ENCODE measurements at regions of chr20 and their contacts with region 1.

Region 1: GRCh38 chr20:57498425-57499400 is 26.2 kb downstream of the CTCFL start:
- DNase-seq: peak; percentile 60
- H3K4me3 ChIP-seq: no peak overlapping the region
- H3K27ac ChIP-seq: no peak overlapping the region
- H3K4me1 ChIP-seq: peaks cover 2 to 6% of the 10 kb centered on the region in 2 experiments; a peak in 2 of 4 replicates
- H3K27me3 ChIP-seq: no peaks in the 10 kb centered on the region; the same call in 1 of the 2 replicates
- CTCF ChIP-seq: peak; percentile 47
- EP300 ChIP-seq: no peak
- RAD21 ChIP-seq: peak; percentile 66

Region 2: GRCh38 chr20:57266291-57267157 is 232.2 kb before region 1 on chr20 and contains the start of gene BMP7:
- CTCF ChIA-PET with region 1: no interaction called
- POLR2A ChIA-PET with region 1: no interaction called
- DNase-seq: peak; percentile 79
- H3K4me3 ChIP-seq: peak within 1 kb of the TSS in 1 of 2 experiments; percentile 42; a peak in 1 of 4 replicates
- H3K27ac ChIP-seq: no peak within 1 kb of the TSS; a peak in 1 of 4 replicates
- H3K4me1 ChIP-seq: peaks cover 0 to 15% of the 10 kb centered on the region in 2 experiments; a peak in 1 of 4 replicates
- H3K27me3 ChIP-seq: peaks cover 8% of the 10 kb centered on the region; the same call in 1 of the 2 replicates
- CTCF ChIP-seq: no peak
- EP300 ChIP-seq: no peak
- RAD21 ChIP-seq: no peak
- polyA plus RNA-seq, gene BMP7: 0.10 TPM in 1 of 2 replicates, not detected in the other

Region 3: DNA sequence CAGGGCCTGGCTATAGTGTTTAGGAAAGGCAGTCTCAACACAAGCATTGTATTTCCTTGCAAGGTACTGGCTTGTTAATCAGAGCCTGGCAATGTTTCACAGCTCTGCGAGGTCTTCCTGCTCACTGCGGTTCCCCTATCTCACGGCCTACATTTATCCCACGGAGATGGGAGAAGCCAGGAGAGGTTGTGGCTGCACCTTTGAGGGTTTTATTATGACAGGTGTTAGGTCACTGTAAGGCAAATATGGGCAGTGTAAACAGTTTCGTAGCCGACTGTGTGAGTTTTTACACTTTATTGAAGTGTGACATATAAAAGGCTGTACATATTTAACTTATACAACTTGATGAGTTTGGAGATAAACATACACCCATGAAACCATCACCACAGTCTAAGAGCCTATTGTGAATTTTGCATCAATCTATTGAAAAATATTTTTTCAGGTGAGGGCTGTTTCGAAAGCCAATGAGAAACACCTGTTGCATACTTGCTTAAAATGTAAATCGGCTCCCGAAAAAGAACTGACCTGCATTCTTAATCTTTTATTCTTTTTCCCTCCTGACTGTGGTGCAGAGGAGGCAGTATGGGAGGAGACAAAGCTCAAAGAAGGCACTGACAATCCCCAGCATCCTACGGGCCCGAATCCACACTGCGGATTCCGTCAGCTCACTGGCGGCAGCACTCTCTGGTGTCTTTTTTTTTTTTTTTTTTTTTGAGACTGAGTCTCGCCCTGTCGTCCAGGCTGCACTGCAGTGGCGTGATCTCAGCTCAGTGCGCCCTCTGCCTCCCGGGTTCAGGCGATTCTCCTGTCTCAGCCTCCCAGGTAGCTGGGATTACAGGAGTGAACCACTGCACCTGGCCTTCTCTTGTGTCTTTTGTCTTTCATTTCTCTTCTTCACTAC is 115.0 kb before region 1 on chr20:
- CTCF ChIA-PET with region 1: interaction called, 68 read pairs
- POLR2A ChIA-PET with region 1: no interaction called
- DNase-seq: no peak
- H3K4me3 ChIP-seq: no peak overlapping the region
- H3K27ac ChIP-seq: no peak overlapping the region
- H3K4me1 ChIP-seq: no peaks in the 10 kb centered on the region
- H3K27me3 ChIP-seq: no peaks in the 10 kb centered on the region
- CTCF ChIP-seq: no peak
- EP300 ChIP-seq: no peak
- RAD21 ChIP-seq: no peak

Region 4: GRCh38 chr20:57473246-57474048 is 25.3 kb before region 1 on chr20:
- CTCF ChIA-PET with region 1: interaction called, 12 read pairs
- POLR2A ChIA-PET with region 1: no interaction called
- DNase-seq: no peak
- H3K4me3 ChIP-seq: no peak overlapping the region
- H3K27ac ChIP-seq: no peak overlapping the region
- H3K4me1 ChIP-seq: peaks cover 0 to 17% of the 10 kb centered on the region in 2 experiments; a peak in 1 of 4 replicates
- H3K27me3 ChIP-seq: peaks cover 7% of the 10 kb centered on the region; the same call in 1 of the 2 replicates
- CTCF ChIP-seq: no peak
- EP300 ChIP-seq: no peak
- RAD21 ChIP-seq: no peak

Region 5: GRCh38 chr20:57514273-57514751 is 15.6 kb after region 1 on chr20:
- CTCF ChIA-PET with region 1: interaction called, 32 read pairs
- POLR2A ChIA-PET with region 1: no interaction called
- DNase-seq: peak; percentile 77
- H3K4me3 ChIP-seq: no peak overlapping the region; a peak in 1 of 4 replicates
- H3K27ac ChIP-seq: no peak overlapping the region
- H3K4me1 ChIP-seq: peaks cover 0 to 2% of the 10 kb centered on the region in 2 experiments; a peak in 1 of 4 replicates
- H3K27me3 ChIP-seq: no peaks in the 10 kb centered on the region; the same call in 1 of the 2 replicates
- CTCF ChIP-seq: peak; percentile 72
- EP300 ChIP-seq: no peak
- RAD21 ChIP-seq: peak; percentile 94

Region 6: GRCh38 chr20:57596998-57597939 is 98.6 kb after region 1 on chr20:
- CTCF ChIA-PET with region 1: interaction called, 403 read pairs
- POLR2A ChIA-PET with region 1: no interaction called
- DNase-seq: peak; percentile 94
- H3K4me3 ChIP-seq: peak overlapping the region in 1 of 2 experiments; percentile 18; a peak in 1 of 4 replicates
- H3K27ac ChIP-seq: no peak overlapping the region
- H3K4me1 ChIP-seq: peaks cover 0 to 9% of the 10 kb centered on the region in 2 experiments; a peak in 1 of 4 replicates
- H3K27me3 ChIP-seq: no peaks in the 10 kb centered on the region
- CTCF ChIP-seq: peak; percentile 83
- EP300 ChIP-seq: no peak
- RAD21 ChIP-seq: peak; percentile 82